ENCODE measurements at regions of chr10 and their contacts with region 1.

Region 1: GRCh38 chr10:70267161-70267933 is 16.5 kb downstream of the NPFFR1 start:
- DNase-seq: peak; percentile 41 to 45
- H3K4me3 ChIP-seq: no peak overlapping the region
- H3K4me3 Mint-ChIP-seq: no peak overlapping the region
- H3K27ac Mint-ChIP-seq: no peak overlapping the region
- H3K4me1 ChIP-seq: no peaks in the 10 kb centered on the region; the same call in 1 of the 2 replicates
- H3K4me1 Mint-ChIP-seq: peaks cover 6% of the 10 kb centered on the region
- H3K27me3 ChIP-seq: no peaks in the 10 kb centered on the region; the same call in 1 of the 2 replicates
- H3K27me3 Mint-ChIP-seq: no peaks in the 10 kb centered on the region
- CTCF ChIP-seq: no peak

Region 2: DNA sequence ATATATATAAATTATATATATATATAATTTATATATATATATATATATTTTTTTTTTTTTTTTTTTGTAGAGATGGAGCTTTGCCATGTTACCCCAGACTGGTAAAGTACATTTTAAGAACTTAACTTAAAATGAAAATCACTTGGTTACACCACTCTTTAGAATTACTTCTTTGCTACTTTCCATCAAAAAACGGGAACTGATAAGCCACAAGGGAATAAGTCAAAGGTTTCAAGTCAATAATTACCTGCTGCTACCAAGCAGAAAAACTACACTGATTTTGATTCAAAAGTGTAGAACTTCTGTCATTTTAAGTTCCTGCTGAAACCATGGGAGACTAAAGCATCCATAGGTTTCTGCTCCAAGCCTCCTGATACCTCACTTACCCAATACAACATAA is 46.3 kb before region 1 on chr10:
- CTCF ChIA-PET with region 1: interaction called, 167 read pairs
- POLR2A ChIA-PET with region 1: interaction called, 10 read pairs
- intact Hi-C with region 1: loop called (anchors 1 kb)
- DNase-seq: no peak
- H3K4me3 ChIP-seq: no peak overlapping the region
- H3K4me3 Mint-ChIP-seq: no peak overlapping the region
- H3K27ac Mint-ChIP-seq: peak overlapping the region; percentile 19
- H3K4me1 ChIP-seq: peaks cover 12% of the 10 kb centered on the region; the same call in 1 of the 2 replicates
- H3K4me1 Mint-ChIP-seq: peaks cover 14% of the 10 kb centered on the region
- H3K27me3 ChIP-seq: no peaks in the 10 kb centered on the region
- H3K27me3 Mint-ChIP-seq: no peaks in the 10 kb centered on the region
- CTCF ChIP-seq: no peak

Region 3: DNA sequence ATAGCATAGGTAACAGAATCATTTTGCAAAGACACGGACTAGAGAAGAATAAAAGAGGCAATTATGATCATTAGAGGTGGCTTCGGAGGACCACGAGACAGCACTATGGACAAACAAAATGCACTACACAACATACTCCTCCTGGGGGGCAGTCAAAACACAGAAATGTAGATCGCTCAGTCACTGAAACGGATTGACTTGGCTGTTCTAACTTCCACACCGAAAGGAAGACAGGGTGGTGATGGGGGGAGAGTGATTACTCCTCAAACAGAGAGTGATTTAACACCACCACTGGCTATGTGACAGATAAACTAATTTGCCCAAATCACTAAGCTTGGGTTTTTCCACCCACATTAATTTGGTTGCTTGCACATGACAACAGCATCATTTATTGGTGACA is 20.0 kb before region 1 on chr10:
- CTCF ChIA-PET with region 1: interaction called, 12 read pairs
- POLR2A ChIA-PET with region 1: no interaction called
- intact Hi-C with region 1: no loop called
- DNase-seq: no peak
- H3K4me3 ChIP-seq: no peak overlapping the region
- H3K4me3 Mint-ChIP-seq: no peak overlapping the region
- H3K27ac Mint-ChIP-seq: no peak overlapping the region
- H3K4me1 ChIP-seq: no peaks in the 10 kb centered on the region
- H3K4me1 Mint-ChIP-seq: no peaks in the 10 kb centered on the region
- H3K27me3 ChIP-seq: no peaks in the 10 kb centered on the region
- H3K27me3 Mint-ChIP-seq: peaks cover 7% of the 10 kb centered on the region
- CTCF ChIP-seq: no peak

Region 4: GRCh38 chr10:70302292-70302691 is 34.9 kb after region 1 on chr10:
- CTCF ChIA-PET with region 1: interaction called, 11 read pairs
- POLR2A ChIA-PET with region 1: no interaction called
- intact Hi-C with region 1: loop called (anchors 2 kb)
- DNase-seq: no peak
- H3K4me3 ChIP-seq: no peak overlapping the region
- H3K4me3 Mint-ChIP-seq: no peak overlapping the region
- H3K27ac Mint-ChIP-seq: no peak overlapping the region
- H3K4me1 ChIP-seq: no peaks in the 10 kb centered on the region
- H3K4me1 Mint-ChIP-seq: no peaks in the 10 kb centered on the region
- H3K27me3 ChIP-seq: no peaks in the 10 kb centered on the region
- H3K27me3 Mint-ChIP-seq: no peaks in the 10 kb centered on the region
- CTCF ChIP-seq: no peak

Region 5: GRCh38 chr10:70355051-70356021 is 88.0 kb after region 1 on chr10:
- CTCF ChIA-PET with region 1: interaction called, 27 read pairs
- POLR2A ChIA-PET with region 1: no interaction called
- intact Hi-C with region 1: loop called (anchors 2 kb)
- DNase-seq: no peak
- H3K4me3 ChIP-seq: no peak overlapping the region
- H3K4me3 Mint-ChIP-seq: no peak overlapping the region
- H3K27ac Mint-ChIP-seq: no peak overlapping the region
- H3K4me1 ChIP-seq: peaks cover 60% of the 10 kb centered on the region
- H3K4me1 Mint-ChIP-seq: peaks cover 47% of the 10 kb centered on the region
- H3K27me3 ChIP-seq: no peaks in the 10 kb centered on the region
- H3K27me3 Mint-ChIP-seq: no peaks in the 10 kb centered on the region
- CTCF ChIP-seq: no peak

Region 6: DNA sequence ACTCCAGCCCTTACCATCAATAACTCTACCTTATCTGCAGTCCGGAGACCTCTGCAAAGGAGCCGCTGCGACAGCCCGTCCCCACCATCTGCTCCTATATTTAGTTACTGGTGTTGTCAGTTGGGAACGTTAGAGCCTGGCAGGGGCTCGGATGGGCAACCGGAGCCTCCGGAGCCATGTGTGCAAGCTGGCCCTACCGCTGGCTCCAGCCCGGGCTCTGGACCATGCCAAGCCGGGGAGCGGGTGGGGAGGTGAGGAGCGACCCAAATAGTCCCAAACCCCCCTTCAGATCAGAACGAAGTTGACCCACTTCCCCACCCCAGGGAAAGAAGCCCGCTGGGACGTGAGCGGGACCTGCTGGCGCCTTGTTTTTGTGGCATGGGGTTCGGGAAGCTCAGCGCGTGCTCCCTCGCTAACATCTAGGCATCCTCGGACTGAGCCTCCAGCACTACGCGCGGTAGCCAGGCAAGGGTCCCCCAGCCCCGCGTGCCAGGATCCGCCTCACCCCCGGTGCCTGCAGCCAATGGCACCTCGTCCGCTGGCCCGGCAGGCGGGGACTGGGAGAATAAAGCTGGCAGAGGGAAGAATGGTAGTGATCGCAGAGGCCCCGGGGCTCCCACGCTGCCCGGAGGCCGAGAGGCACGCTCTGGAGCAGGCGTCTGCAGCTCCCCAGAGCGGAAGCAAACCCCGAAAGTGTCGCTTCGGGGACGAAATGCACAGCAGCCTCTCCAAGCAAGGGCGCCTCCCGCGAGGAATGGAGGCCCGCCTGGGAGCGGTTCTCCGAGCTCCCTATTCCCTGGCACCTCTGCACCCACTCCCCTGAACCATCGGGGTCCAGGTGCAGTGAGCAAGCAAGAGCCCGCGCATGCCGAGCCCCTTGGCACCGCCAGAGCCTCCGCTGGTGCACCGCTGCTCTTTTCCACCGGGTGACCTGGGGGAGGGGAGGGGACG is 114.4 kb after region 1 on chr10:
- CTCF ChIA-PET with region 1: interaction called, 87 read pairs
- POLR2A ChIA-PET with region 1: no interaction called
- intact Hi-C with region 1: no loop called
- DNase-seq: peak; percentile 65 to 72
- H3K4me3 ChIP-seq: peak overlapping the region; percentile 73
- H3K4me3 Mint-ChIP-seq: peak overlapping the region; percentile 83
- H3K27ac Mint-ChIP-seq: peak overlapping the region; percentile 61
- H3K4me1 ChIP-seq: peaks cover 38% of the 10 kb centered on the region
- H3K4me1 Mint-ChIP-seq: peaks cover 21% of the 10 kb centered on the region
- H3K27me3 ChIP-seq: no peaks in the 10 kb centered on the region
- H3K27me3 Mint-ChIP-seq: no peaks in the 10 kb centered on the region
- CTCF ChIP-seq: no peak

Region 7: DNA sequence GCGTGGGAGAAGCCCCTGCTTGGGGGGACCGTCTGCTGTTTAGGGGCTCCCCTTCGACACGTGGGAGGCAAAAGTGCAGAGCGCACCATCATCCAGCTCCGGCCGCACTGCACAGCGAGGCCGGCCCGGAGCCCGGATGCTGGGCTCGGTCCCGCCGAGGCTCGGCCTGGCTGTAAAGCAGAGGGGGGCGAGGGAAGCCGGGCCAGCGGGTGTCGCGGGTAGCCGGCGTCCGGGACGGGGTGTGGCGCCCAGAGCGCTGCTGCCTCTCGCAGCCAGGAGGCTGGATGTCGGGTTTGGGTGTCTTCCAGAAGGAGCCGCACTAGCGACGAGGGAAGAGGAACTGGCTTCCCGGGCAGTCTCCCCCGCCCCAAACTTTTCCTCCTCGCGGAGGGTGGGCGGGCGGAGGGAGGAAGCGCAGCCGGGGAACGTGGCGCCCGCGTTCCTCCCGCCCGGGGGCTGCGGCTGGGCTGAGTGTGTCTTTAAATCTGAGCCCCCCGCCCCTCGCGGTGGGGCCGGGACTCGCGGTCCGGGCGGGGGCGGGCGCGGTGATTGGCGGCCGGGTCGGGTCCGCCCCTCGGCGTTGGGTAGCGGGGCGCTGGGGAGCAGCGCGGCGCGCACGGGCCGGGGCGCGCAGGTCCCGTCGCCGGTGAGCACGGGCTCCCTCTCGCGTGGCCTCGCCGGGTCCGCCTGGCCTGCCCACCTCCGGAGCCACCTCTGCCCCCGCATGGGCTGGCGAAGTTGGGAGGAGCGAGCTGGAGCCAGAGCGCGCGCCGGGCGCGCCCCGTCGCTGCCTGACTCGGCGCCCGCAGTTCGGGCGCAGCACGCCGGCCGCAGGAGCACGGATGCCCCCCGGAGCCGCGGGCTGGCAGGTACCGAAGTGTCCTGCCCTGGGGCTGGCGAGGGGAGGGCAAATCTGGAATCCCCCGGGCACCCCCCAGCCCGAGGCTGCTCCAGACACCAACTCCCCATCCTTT is 211.1 kb after region 1 on chr10 and contains the start of gene PALD1:
- CTCF ChIA-PET with region 1: no interaction called
- POLR2A ChIA-PET with region 1: no interaction called
- intact Hi-C with region 1: no loop called
- DNase-seq: peak; percentile 82 to 89
- H3K4me3 ChIP-seq: peak within 1 kb of the TSS; percentile 65
- H3K4me3 Mint-ChIP-seq: peak within 1 kb of the TSS; percentile 87
- H3K27ac Mint-ChIP-seq: peak within 1 kb of the TSS; percentile 40
- H3K4me1 ChIP-seq: peaks cover 16% of the 10 kb centered on the region
- H3K4me1 Mint-ChIP-seq: peaks cover 9% of the 10 kb centered on the region
- H3K27me3 ChIP-seq: no peaks in the 10 kb centered on the region
- H3K27me3 Mint-ChIP-seq: no peaks in the 10 kb centered on the region
- CTCF ChIP-seq: peak in 1 of 2 experiments; percentile 45
- total RNA-seq, gene PALD1: 8.9 and 10.3 TPM in 2 replicates